ENCODE measurements at regions of chr4 and their contacts with region 1.

Region 1: DNA sequence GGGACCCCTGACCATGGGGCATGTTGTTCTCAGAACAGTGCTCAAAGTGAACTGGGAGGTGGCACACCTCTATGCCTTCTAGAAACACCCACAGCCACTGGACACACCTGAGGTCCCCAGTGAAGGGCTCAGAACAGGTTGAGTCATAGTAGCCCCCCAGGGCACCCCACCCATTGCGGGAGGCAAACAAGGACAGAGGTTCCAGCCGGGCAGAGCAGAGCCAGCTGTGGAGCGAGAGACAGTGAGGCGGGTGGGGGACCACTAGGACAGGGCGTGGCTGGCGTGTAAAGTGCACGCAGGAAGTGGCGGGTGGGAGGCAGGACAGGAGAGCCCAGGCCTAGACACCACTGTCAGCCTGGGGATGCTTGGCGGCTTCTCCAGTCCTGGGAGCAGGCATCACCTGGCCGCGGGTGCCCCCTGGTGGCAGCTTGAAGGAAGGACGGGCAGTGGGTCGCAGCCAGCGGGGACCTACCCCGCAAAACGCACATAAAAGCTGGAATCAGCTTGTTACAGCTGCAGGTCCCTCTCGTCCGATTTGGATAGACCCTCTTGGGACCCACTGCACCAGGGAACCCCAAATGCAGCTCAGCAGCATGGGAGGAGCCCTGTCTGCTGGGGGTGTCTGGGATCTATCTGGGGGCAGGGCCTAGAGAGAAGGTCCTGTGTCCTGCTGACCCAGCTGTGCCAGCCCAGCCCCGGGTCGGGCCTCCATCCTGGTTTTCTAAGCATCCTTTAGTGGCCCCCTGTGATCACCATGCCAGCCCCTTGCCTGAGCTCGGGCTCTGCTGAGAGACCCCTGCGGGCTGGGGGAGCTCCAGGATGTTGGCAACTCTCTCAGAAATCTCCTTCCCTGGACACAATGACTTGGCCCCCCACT is 57.6 kb downstream of the WFS1 start:
- DNase-seq: peak; percentile 38 to 98
- H3K4me3 ChIP-seq: no peak overlapping the region
- H3K27ac ChIP-seq: no peak overlapping the region
- H3K4me1 ChIP-seq: peaks cover 0 to 8% (median 3%) of the 10 kb centered on the region in 4 experiments; a peak in 3 of 7 replicates
- H3K27me3 ChIP-seq: no peaks in the 10 kb centered on the region
- CTCF ChIP-seq: peak in 2 of 3 experiments; percentile 97 to 98; a peak in 3 of 4 replicates
- EP300 ChIP-seq: no peak
- POLR2A ChIP-seq: no peak
- RAD21 ChIP-seq: peak; percentile 95 to 98

Region 2: GRCh38 chr4:5998333-5998936 is 328.8 kb before region 1 on chr4:
- CTCF ChIA-PET with region 1: interaction called, 19 read pairs
- POLR2A ChIA-PET with region 1: no interaction called
- DNase-seq: peak; percentile 38 to 79
- H3K4me3 ChIP-seq: no peak overlapping the region
- H3K27ac ChIP-seq: no peak overlapping the region
- H3K4me1 ChIP-seq: no peaks in the 10 kb centered on the region
- H3K27me3 ChIP-seq: 0 out of 7 replicates have a peak, but pooled peaks cover 0 to 1% (median 0%) of the 10 kb centered on the region in 4 experiments
- CTCF ChIP-seq: peak in 2 of 3 experiments; percentile 93 to 97; a peak in 3 of 4 replicates
- EP300 ChIP-seq: no peak
- POLR2A ChIP-seq: no peak
- RAD21 ChIP-seq: peak; percentile 98 to 99

Region 3: DNA sequence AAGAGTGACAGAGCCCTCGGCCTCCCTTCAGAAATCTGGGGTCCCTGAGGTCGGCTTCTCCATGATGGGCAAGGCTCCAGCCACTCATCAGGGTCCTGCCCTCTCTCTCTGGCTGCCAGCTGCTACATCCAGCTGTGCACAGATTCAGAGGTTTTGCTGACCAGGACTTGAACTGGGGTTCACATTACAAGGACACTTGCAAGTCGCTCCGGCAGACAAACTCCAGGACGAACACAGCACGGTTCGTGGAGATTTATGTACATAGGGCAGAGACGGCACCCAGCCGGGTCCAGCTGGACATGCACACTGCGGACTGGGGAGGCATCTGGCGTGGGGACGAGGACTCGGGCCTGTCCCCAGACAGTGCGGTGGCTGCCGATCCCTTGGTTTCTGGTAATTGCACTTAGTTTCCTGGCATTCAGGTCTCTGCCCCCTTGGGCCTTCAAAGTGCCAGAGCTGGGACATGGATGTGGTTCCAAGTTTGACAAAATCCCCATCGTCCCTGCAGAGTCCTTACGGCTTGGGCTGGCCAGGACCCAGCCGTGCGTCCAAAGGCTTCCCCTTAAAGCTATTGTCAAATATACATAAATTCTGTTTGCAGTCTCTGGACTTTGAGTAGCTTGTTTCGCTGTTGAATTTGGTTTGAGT is 302.8 kb before region 1 on chr4:
- CTCF ChIA-PET with region 1: no interaction called
- POLR2A ChIA-PET with region 1: no interaction called
- DNase-seq: no peak
- H3K4me3 ChIP-seq: no peak overlapping the region
- H3K27ac ChIP-seq: no peak overlapping the region
- H3K4me1 ChIP-seq: peaks cover 0 to 6% (median under 1%) of the 10 kb centered on the region in 4 experiments; a peak in 3 of 7 replicates
- H3K27me3 ChIP-seq: no peaks in the 10 kb centered on the region
- CTCF ChIP-seq: no peak
- EP300 ChIP-seq: no peak
- POLR2A ChIP-seq: no peak
- RAD21 ChIP-seq: no peak

Region 4: DNA sequence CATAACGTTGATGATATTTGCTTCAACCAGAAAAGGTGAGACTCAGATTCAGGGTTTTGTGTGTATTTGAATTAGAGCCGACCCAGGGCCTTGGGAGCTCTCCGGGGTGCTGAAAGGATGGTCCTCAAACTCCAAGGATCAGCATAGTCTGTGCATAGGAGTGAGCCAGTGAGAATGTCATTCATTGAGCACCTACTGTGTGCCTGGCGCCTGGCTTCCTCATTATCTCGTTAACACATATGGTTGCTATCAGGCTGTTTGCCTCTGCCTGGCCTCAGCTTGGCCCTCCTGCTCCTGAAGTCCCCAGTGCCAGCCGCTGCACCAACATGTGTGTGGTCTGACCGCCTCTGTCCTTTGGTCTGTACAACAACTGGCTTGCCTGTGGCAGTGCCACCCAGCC is 101.8 kb before region 1 on chr4:
- CTCF ChIA-PET with region 1: interaction called, 10 read pairs
- POLR2A ChIA-PET with region 1: no interaction called
- DNase-seq: peak in 1 of 2 experiments; percentile 85
- H3K4me3 ChIP-seq: no peak overlapping the region
- H3K27ac ChIP-seq: no peak overlapping the region
- H3K4me1 ChIP-seq: peaks cover 0 to 4% (median 1%) of the 10 kb centered on the region in 4 experiments; a peak in 5 of 7 replicates
- H3K27me3 ChIP-seq: peaks cover 0 to 11% (median 7%) of the 10 kb centered on the region in 4 experiments; a peak in 4 of 7 replicates
- CTCF ChIP-seq: no peak
- EP300 ChIP-seq: no peak
- POLR2A ChIP-seq: no peak
- RAD21 ChIP-seq: no peak; a peak in 1 of 4 replicates

Region 5: DNA sequence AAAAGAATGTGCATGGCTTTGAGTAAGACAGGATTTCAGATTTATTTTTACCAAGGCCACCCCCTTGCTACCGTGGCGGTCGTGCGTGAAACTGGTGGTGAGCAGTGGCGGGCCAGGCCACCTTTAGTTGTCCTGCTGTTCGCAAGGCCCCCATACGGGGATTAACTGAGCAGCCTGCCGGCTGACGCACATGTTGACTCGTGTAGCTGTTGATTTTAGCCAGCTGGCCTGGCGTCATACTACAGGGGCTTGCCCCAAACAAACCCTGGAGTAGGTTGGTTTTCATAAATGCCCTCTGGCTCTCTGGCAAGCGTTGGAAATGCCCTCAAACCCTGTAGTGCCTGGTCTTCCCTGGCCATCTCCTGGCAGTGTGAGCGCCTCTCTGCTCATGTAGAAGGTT is 29.2 kb before region 1 on chr4:
- CTCF ChIA-PET with region 1: interaction called, 20 read pairs
- POLR2A ChIA-PET with region 1: no interaction called
- DNase-seq: no peak
- H3K4me3 ChIP-seq: no peak overlapping the region
- H3K27ac ChIP-seq: no peak overlapping the region
- H3K4me1 ChIP-seq: no peaks in the 10 kb centered on the region
- H3K27me3 ChIP-seq: no peaks in the 10 kb centered on the region
- CTCF ChIP-seq: no peak
- EP300 ChIP-seq: no peak
- POLR2A ChIP-seq: no peak
- RAD21 ChIP-seq: no peak

Region 6: GRCh38 chr4:6355052-6355451 is 27.8 kb after region 1 on chr4:
- CTCF ChIA-PET with region 1: interaction called, 175 read pairs
- POLR2A ChIA-PET with region 1: no interaction called
- DNase-seq: no peak
- H3K4me3 ChIP-seq: no peak overlapping the region
- H3K27ac ChIP-seq: no peak overlapping the region
- H3K4me1 ChIP-seq: no peaks in the 10 kb centered on the region
- H3K27me3 ChIP-seq: 0 out of 7 replicates have a peak, but pooled peaks cover 0 to 2% (median 0%) of the 10 kb centered on the region in 4 experiments
- CTCF ChIP-seq: no peak
- EP300 ChIP-seq: no peak
- POLR2A ChIP-seq: no peak
- RAD21 ChIP-seq: no peak

Region 7: GRCh38 chr4:6390356-6390755 is 63.1 kb after region 1 on chr4:
- CTCF ChIA-PET with region 1: interaction called, 16 read pairs
- POLR2A ChIA-PET with region 1: no interaction called
- DNase-seq: no peak
- H3K4me3 ChIP-seq: no peak overlapping the region
- H3K27ac ChIP-seq: no peak overlapping the region
- H3K4me1 ChIP-seq: peaks cover 0 to 4% (median under 1%) of the 10 kb centered on the region in 4 experiments; a peak in 3 of 7 replicates
- H3K27me3 ChIP-seq: no peaks in the 10 kb centered on the region
- CTCF ChIP-seq: no peak
- EP300 ChIP-seq: no peak
- POLR2A ChIP-seq: no peak
- RAD21 ChIP-seq: no peak

Region 8: GRCh38 chr4:6427439-6428090 is 100.3 kb after region 1 on chr4:
- CTCF ChIA-PET with region 1: interaction called, 24 read pairs
- POLR2A ChIA-PET with region 1: interaction called, 3 read pairs
- DNase-seq: no peak
- H3K4me3 ChIP-seq: no peak overlapping the region
- H3K27ac ChIP-seq: no peak overlapping the region
- H3K4me1 ChIP-seq: no peaks in the 10 kb centered on the region
- H3K27me3 ChIP-seq: no peaks in the 10 kb centered on the region
- CTCF ChIP-seq: peak in 2 of 3 experiments; percentile 58 to 59; a peak in 3 of 4 replicates
- EP300 ChIP-seq: no peak
- POLR2A ChIP-seq: no peak
- RAD21 ChIP-seq: peak; percentile 58 to 66

Region 9: DNA sequence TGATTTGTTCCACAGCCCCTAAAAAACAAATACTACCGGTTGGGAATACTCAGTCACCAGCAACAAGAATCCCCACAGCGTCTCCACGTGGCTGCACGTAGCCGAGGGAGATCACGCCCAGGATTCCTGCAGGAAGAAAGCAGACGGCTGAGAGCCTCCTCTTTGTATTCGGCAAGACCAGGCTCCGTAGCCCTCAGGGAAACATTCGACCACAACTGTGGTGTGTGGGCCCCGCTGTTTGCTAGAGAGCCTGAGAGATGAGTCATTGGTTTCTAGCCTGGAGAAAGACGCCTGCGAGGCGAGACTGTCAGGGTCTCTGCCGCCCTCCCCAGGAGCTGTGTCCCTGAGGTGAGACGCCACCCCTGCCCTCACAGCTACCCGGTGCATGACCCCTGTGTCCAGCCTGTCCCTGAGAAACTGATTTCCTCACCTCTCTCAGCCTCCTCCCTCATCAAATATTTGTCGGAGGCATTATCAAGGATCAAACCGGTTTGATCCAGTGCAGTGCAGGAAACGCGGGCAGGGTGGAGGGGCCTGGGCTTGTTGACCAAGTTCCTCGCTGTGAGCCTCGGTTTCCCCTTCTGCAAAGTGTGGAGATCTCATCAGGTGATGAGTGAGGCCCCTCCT is 361.7 kb after region 1 on chr4:
- CTCF ChIA-PET with region 1: no interaction called
- POLR2A ChIA-PET with region 1: no interaction called
- DNase-seq: peak in 1 of 2 experiments; percentile 55
- H3K4me3 ChIP-seq: no peak overlapping the region
- H3K27ac ChIP-seq: 0 out of 2 replicates have a peak overlapping the region, but pooled peaks have one; percentile 10
- H3K4me1 ChIP-seq: peaks cover 0 to 20% (median 16%) of the 10 kb centered on the region in 4 experiments; a peak in 6 of 7 replicates
- H3K27me3 ChIP-seq: 0 out of 7 replicates have a peak, but pooled peaks cover 0 to 2% (median 0%) of the 10 kb centered on the region in 4 experiments
- CTCF ChIP-seq: no peak
- EP300 ChIP-seq: no peak
- POLR2A ChIP-seq: no peak
- RAD21 ChIP-seq: no peak

Measured in H1 (cell line).